Activated B cell treated with CpG ODN at 0.5 μM for 24 hours (primary cell): ENCODE measurements at regions of chr6 and their contacts with region 1.

Region 1: GRCh38 chr6:29737707-29738630 is 14.7 kb downstream of the HLA-F start:
- DNase-seq: peak; percentile 42
- ATAC-seq: peak; percentile 86
- H3K4me3 Mint-ChIP-seq: no peak overlapping the region
- H3K27ac Mint-ChIP-seq: no peak overlapping the region
- H3K4me1 Mint-ChIP-seq: peaks cover 12% of the 10 kb centered on the region
- H3K27me3 Mint-ChIP-seq: no peaks in the 10 kb centered on the region
- CTCF ChIP-seq: no peak

Region 2: DNA sequence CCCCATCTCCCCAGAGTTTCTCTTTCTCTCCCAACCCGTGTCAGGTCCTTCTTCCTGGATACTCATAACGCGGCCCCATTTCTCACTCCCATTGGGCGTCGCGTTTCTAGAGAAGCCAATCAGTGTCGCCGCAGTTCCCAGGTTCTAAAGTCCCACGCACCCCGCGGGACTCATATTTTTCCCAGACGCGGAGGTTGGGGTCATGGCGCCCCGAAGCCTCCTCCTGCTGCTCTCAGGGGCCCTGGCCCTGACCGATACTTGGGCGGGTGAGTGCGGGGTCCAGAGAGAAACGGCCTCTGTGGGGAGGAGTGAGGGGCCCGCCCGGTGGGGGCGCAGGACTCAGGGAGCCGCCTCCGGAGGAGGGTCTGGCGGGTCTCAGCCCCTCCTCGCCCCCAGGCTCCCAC is 14.7 kb before region 1 on chr6 and contains the start of gene HLA-F:
- CTCF ChIA-PET with region 1: interaction called, 5 read pairs
- POLR2A ChIA-PET with region 1: interaction called, 31 read pairs
- intact Hi-C with region 1: no loop called
- DNase-seq: peak; percentile 76
- ATAC-seq: peak; percentile 89
- H3K4me3 Mint-ChIP-seq: peak within 1 kb of the TSS; percentile 94
- H3K27ac Mint-ChIP-seq: peak within 1 kb of the TSS; percentile 98
- H3K4me1 Mint-ChIP-seq: peaks cover 61% of the 10 kb centered on the region
- H3K27me3 Mint-ChIP-seq: no peaks in the 10 kb centered on the region
- CTCF ChIP-seq: no peak
- total RNA-seq, gene HLA-F: 726 and 736 TPM in 2 replicates

Region 3: GRCh38 chr6:29777310-29777709 is 39.3 kb after region 1 on chr6:
- CTCF ChIA-PET with region 1: no interaction called
- POLR2A ChIA-PET with region 1: no interaction called
- intact Hi-C with region 1: no loop called
- DNase-seq: no peak
- ATAC-seq: no peak
- H3K4me3 Mint-ChIP-seq: no peak overlapping the region
- H3K27ac Mint-ChIP-seq: no peak overlapping the region
- H3K4me1 Mint-ChIP-seq: no peaks in the 10 kb centered on the region
- H3K27me3 Mint-ChIP-seq: peaks cover 48% of the 10 kb centered on the region
- CTCF ChIP-seq: no peak

Region 4: DNA sequence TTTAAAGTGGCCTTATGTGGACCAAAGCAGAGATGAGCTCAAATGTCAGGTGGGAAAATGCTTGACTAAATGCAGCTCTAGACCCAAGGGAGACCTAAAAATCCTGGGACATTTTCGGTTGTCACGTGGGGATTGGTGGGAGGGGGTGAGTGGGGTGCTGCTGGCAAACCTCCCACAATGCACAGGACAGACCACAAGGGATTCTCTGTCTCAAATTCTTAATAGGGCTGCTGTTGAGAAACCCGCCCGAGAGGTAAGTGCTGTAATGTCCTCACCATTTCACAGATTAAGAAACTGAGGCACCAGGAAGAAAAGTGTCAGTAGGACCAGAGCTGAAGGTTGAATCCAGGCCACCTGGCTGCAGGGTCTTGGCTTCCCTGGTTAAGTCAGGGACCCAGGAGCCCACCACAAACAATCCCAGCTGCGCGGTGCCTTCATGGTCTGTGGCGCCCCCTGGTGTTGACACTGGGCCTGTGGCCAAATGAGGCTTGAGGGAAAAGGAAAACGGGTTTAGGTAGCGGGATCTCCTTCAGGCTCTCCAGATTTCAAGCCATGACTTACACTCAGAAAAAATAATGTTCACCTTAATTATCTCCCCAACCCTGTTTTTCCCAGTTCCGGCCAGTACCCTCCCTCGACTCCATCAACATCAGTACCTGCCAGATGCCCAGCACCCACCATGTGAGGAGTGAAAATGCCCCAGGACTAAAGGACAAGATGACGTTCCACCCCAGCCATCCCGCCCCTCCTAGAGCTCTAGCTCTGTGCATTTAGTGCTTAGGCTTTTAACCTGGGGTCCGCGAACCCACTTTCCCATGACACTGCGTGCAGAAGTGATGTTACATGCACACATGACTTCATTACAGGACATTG is 96.8 kb after region 1 on chr6:
- CTCF ChIA-PET with region 1: interaction called, 66 read pairs
- POLR2A ChIA-PET with region 1: interaction called, 7 read pairs
- intact Hi-C with region 1: loop called (anchors 1 kb)
- DNase-seq: peak; percentile 45
- ATAC-seq: peak; percentile 40
- H3K4me3 Mint-ChIP-seq: no peak overlapping the region
- H3K27ac Mint-ChIP-seq: no peak overlapping the region
- H3K4me1 Mint-ChIP-seq: no peaks in the 10 kb centered on the region
- H3K27me3 Mint-ChIP-seq: peaks cover 67% of the 10 kb centered on the region
- CTCF ChIP-seq: no peak

Region 5: GRCh38 chr6:30013291-30013922 is 275.4 kb after region 1 on chr6:
- CTCF ChIA-PET with region 1: interaction called, 8 read pairs
- POLR2A ChIA-PET with region 1: no interaction called
- intact Hi-C with region 1: loop called (anchors 1 kb)
- DNase-seq: no peak
- ATAC-seq: peak; percentile 70
- H3K4me3 Mint-ChIP-seq: no peak overlapping the region
- H3K27ac Mint-ChIP-seq: no peak overlapping the region
- H3K4me1 Mint-ChIP-seq: no peaks in the 10 kb centered on the region
- H3K27me3 Mint-ChIP-seq: no peaks in the 10 kb centered on the region
- CTCF ChIP-seq: peak; percentile 53

Region 6: GRCh38 chr6:30130887-30131862 is 393.2 kb after region 1 on chr6:
- CTCF ChIA-PET with region 1: interaction called, 6 read pairs
- POLR2A ChIA-PET with region 1: no interaction called
- intact Hi-C with region 1: loop called (anchors 1 kb)
- DNase-seq: no peak
- ATAC-seq: peak; percentile 89
- H3K4me3 Mint-ChIP-seq: no peak overlapping the region
- H3K27ac Mint-ChIP-seq: no peak overlapping the region
- H3K4me1 Mint-ChIP-seq: peaks cover 15% of the 10 kb centered on the region
- H3K27me3 Mint-ChIP-seq: peaks cover 62% of the 10 kb centered on the region
- CTCF ChIP-seq: peak; percentile 83